CD8-positive, alpha-beta T cell (primary cell): ENCODE measurements at regions of chr5 and their contacts with region 1.

Region 1: DNA sequence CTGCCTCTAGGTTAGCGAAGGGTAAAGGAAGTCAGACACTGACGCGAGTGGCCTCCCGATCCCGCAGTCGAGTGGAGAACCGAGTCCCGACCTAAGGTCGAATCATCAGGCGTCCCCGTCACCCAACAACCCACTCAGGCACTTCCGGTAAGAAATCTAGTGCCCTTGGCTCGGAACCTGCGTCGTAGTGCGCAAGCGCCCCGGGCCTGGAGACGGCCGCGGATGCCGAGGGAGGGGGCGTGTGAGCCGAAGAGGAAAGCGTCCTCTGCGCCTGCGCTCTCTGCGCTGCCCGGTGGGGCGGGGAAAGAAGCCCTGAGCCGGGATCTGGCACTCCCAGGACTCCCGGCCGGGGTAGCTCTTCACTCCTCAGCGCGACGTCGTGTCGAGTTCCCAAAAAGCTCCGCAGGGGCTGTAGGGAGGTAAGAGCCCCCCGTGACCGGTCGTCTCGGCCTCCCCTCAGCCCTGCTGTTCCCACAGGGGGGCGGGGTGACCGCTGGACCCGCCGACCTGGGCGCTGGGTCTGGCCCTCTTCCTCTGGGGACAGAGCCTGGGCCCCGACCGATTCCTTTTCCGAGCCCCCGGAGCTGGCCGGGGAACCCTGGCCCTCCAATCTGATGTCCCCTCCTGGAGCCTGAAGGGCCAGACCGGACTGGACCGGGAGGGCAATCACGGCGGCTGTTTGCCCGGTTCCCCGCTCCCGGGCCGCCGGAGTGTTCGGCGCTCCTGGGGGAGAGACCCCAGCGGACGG is at the start of gene ZFYVE16:
- DNase-seq: peak; percentile 91 to 99 (median 97)
- ATAC-seq: peak; percentile 88
- H3K4me3 ChIP-seq: peak within 1 kb of the TSS; percentile 86 to 94
- H3K4me3 Mint-ChIP-seq: peak within 1 kb of the TSS; percentile 99
- H3K27ac ChIP-seq: peak within 1 kb of the TSS; percentile 78 to 93
- H3K27ac Mint-ChIP-seq: peak within 1 kb of the TSS; percentile 100
- H3K4me1 ChIP-seq: peaks cover 12% of the 10 kb centered on the region
- H3K4me1 Mint-ChIP-seq: peaks cover 28% of the 10 kb centered on the region
- H3K27me3 ChIP-seq: no peaks in the 10 kb centered on the region
- H3K27me3 Mint-ChIP-seq: no peaks in the 10 kb centered on the region
- CTCF ChIP-seq: no peak
- total RNA-seq, gene ZFYVE16: 7.6 to 9.9 TPM

Region 2: DNA sequence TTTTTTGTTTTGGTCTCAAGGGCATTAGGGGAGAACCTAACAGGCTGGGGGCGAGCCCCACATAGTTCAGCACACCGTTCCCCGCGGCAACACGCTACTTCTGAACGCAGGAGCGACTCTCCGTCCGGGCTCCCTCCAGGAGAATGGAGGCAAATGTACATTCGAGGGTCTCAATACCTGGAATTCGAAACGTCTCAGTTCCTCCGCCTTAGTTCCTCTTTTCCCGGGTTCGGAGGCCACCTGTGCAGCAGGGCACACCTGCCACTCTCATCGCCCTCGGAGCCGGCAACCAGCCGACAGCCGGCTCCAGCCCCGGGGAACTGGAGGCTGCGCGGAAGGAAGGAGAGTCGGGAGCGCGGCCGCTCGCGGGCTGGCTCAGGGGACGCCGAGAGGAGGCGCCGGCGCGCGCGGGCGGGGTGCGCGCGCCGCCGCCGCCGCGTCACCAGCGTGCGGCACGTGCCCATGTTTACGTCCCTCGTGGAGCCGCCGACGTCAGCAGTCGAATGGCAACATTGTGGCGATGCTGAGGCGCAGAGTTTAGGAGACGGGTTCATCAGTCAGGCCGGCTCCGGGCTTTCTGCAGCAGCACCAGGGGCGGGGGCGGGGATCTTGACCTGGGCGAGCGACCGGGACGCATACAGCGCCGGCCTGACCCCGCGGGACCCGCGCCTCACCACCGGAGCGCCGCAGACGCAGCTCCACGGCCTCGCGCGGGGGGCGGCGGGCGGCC is 1172.1 kb before region 1 on chr5 and contains the start of gene JMY:
- CTCF ChIA-PET with region 1: no interaction called
- POLR2A ChIA-PET with region 1: no interaction called
- intact Hi-C with region 1: loop called in 1 of 2 experiments (anchors 10 kb)
- DNase-seq: peak; percentile 72 to 94 (median 85)
- ATAC-seq: peak; percentile 86
- H3K4me3 ChIP-seq: peak within 1 kb of the TSS; percentile 79 to 81
- H3K4me3 Mint-ChIP-seq: peak within 1 kb of the TSS; percentile 97
- H3K27ac ChIP-seq: peak within 1 kb of the TSS; percentile 91 to 98
- H3K27ac Mint-ChIP-seq: peak within 1 kb of the TSS; percentile 96
- H3K4me1 ChIP-seq: peaks cover 28% of the 10 kb centered on the region
- H3K4me1 Mint-ChIP-seq: peaks cover 34% of the 10 kb centered on the region
- H3K27me3 ChIP-seq: no peaks in the 10 kb centered on the region
- H3K27me3 Mint-ChIP-seq: no peaks in the 10 kb centered on the region
- CTCF ChIP-seq: no peak
- total RNA-seq, gene JMY: 104 TPM

Region 3: GRCh38 chr5:79612667-79613198 is 795.2 kb before region 1 on chr5:
- CTCF ChIA-PET with region 1: no interaction called
- POLR2A ChIA-PET with region 1: no interaction called
- intact Hi-C with region 1: loop called (anchors 2 to 5 kb)
- DNase-seq: no peak
- ATAC-seq: no peak
- H3K4me3 ChIP-seq: peak overlapping the region; percentile 71 to 97
- H3K4me3 Mint-ChIP-seq: peak overlapping the region; percentile 96
- H3K27ac ChIP-seq: peak overlapping the region; percentile 89 to 91
- H3K27ac Mint-ChIP-seq: peak overlapping the region; percentile 98
- H3K4me1 ChIP-seq: peaks cover 26% of the 10 kb centered on the region
- H3K4me1 Mint-ChIP-seq: peaks cover 39% of the 10 kb centered on the region
- H3K27me3 ChIP-seq: no peaks in the 10 kb centered on the region
- H3K27me3 Mint-ChIP-seq: peaks cover 9% of the 10 kb centered on the region
- CTCF ChIP-seq: no peak

Region 4: GRCh38 chr5:79990598-79991507 is 417.1 kb before region 1 on chr5 and contains the start of gene MTX3:
- CTCF ChIA-PET with region 1: no interaction called
- POLR2A ChIA-PET with region 1: no interaction called
- intact Hi-C with region 1: loop called (anchors 2 to 5 kb)
- DNase-seq: peak; percentile 75 to 93 (median 89)
- ATAC-seq: peak; percentile 95
- H3K4me3 ChIP-seq: peak within 1 kb of the TSS; percentile 60 to 72
- H3K4me3 Mint-ChIP-seq: peak within 1 kb of the TSS; percentile 86
- H3K27ac ChIP-seq: peak within 1 kb of the TSS; percentile 51 to 70
- H3K27ac Mint-ChIP-seq: peak within 1 kb of the TSS; percentile 88
- H3K4me1 ChIP-seq: peaks cover 20% of the 10 kb centered on the region
- H3K4me1 Mint-ChIP-seq: peaks cover 32% of the 10 kb centered on the region
- H3K27me3 ChIP-seq: no peaks in the 10 kb centered on the region
- H3K27me3 Mint-ChIP-seq: peaks cover 11% of the 10 kb centered on the region
- CTCF ChIP-seq: no peak
- total RNA-seq, gene MTX3: 26.2 to 27.1 TPM

Region 5: GRCh38 chr5:80346055-80346454 is 61.9 kb before region 1 on chr5:
- CTCF ChIA-PET with region 1: no interaction called
- POLR2A ChIA-PET with region 1: no interaction called
- intact Hi-C with region 1: loop called in 1 of 2 experiments (anchors 5 kb)
- DNase-seq: peak in 8 of 9 experiments; percentile 3 to 56 (median 22)
- ATAC-seq: peak; percentile 57
- H3K4me3 ChIP-seq: no peak overlapping the region
- H3K4me3 Mint-ChIP-seq: no peak overlapping the region
- H3K27ac ChIP-seq: no peak overlapping the region
- H3K27ac Mint-ChIP-seq: no peak overlapping the region
- H3K4me1 ChIP-seq: no peaks in the 10 kb centered on the region
- H3K4me1 Mint-ChIP-seq: peaks cover 4% of the 10 kb centered on the region
- H3K27me3 ChIP-seq: no peaks in the 10 kb centered on the region
- H3K27me3 Mint-ChIP-seq: peaks cover 8% of the 10 kb centered on the region
- CTCF ChIP-seq: no peak

Region 6: GRCh38 chr5:80487829-80488721 is 80.2 kb after region 1 on chr5 and contains the start of gene FAM151B:
- CTCF ChIA-PET with region 1: no interaction called
- POLR2A ChIA-PET with region 1: no interaction called
- intact Hi-C with region 1: loop called in 1 of 2 experiments (anchors 2 kb)
- DNase-seq: peak; percentile 5 to 80 (median 61)
- ATAC-seq: peak; percentile 83
- H3K4me3 ChIP-seq: peak within 1 kb of the TSS; percentile 46 to 68
- H3K4me3 Mint-ChIP-seq: peak within 1 kb of the TSS; percentile 81
- H3K27ac ChIP-seq: peak within 1 kb of the TSS in 1 of 2 experiments; percentile 10
- H3K27ac Mint-ChIP-seq: peak within 1 kb of the TSS; percentile 52
- H3K4me1 ChIP-seq: peaks cover 9% of the 10 kb centered on the region
- H3K4me1 Mint-ChIP-seq: peaks cover 12% of the 10 kb centered on the region
- H3K27me3 ChIP-seq: peaks cover 0 to 7% of the 10 kb centered on the region in 2 experiments
- H3K27me3 Mint-ChIP-seq: peaks cover 16% of the 10 kb centered on the region
- CTCF ChIP-seq: no peak
- total RNA-seq, gene FAM151B: 0.19 TPM in 1 of 2 experiments, not detected in the other

Region 7: DNA sequence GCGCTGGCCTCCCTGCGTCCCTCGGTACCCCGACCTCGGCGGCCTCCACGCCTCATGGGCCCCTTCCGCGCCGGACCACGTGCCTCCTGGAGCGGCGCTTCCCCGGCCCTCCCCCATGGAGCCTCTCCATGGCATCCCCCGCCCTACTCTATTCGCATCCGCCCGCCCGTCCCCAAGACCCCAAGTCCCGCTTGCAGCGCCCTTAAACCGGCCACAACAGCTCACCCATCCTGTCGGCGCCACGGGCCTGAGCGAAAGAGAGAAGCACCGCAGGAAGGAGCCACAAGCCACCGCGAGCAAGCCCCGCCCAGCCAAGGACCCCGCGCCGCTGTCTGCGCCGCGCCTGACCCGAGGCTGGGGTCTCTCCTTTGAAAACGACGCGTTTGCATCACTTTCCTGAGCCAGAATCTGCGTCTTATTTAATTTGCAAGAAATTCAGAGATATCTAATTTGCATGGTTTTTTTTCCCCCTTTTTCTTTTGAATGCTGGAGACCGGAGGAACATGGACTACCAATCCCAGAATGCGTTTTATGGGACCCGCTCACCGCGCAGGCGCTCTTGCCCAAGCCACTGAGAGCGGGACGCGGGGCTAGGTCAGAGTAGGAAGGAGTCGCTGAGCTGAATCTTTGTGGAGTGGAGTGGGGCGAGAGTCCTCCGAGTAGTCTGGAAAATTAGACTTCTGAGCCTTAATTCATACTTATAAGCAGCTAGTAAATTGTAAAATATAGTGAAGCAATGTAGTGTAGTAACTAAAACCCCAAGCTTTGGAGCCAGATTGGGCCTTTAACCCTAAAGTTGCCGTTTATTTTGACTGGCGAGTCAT is 1870.4 kb after region 1 on chr5 and contains the start of gene RPS23:
- CTCF ChIA-PET with region 1: no interaction called
- POLR2A ChIA-PET with region 1: no interaction called
- intact Hi-C with region 1: loop called in 1 of 2 experiments (anchors 5 kb)
- DNase-seq: peak; percentile 73 to 94 (median 86)
- ATAC-seq: peak; percentile 95
- H3K4me3 ChIP-seq: peak within 1 kb of the TSS; percentile 63 to 94
- H3K4me3 Mint-ChIP-seq: peak within 1 kb of the TSS; percentile 97
- H3K27ac ChIP-seq: peak within 1 kb of the TSS; percentile 71 to 84
- H3K27ac Mint-ChIP-seq: peak within 1 kb of the TSS; percentile 96
- H3K4me1 ChIP-seq: peaks cover 18% of the 10 kb centered on the region
- H3K4me1 Mint-ChIP-seq: peaks cover 44% of the 10 kb centered on the region
- H3K27me3 ChIP-seq: no peaks in the 10 kb centered on the region
- H3K27me3 Mint-ChIP-seq: no peaks in the 10 kb centered on the region
- CTCF ChIP-seq: no peak
- total RNA-seq, gene RPS23: 3,866 to 4,021 TPM